Activated CD4-positive, alpha-beta T cell treated with anti-CD3 and anti-CD28 coated beads for 36 hours (primary cell): ENCODE measurements at regions of chr16 and their contacts with region 1.

Region 1: DNA sequence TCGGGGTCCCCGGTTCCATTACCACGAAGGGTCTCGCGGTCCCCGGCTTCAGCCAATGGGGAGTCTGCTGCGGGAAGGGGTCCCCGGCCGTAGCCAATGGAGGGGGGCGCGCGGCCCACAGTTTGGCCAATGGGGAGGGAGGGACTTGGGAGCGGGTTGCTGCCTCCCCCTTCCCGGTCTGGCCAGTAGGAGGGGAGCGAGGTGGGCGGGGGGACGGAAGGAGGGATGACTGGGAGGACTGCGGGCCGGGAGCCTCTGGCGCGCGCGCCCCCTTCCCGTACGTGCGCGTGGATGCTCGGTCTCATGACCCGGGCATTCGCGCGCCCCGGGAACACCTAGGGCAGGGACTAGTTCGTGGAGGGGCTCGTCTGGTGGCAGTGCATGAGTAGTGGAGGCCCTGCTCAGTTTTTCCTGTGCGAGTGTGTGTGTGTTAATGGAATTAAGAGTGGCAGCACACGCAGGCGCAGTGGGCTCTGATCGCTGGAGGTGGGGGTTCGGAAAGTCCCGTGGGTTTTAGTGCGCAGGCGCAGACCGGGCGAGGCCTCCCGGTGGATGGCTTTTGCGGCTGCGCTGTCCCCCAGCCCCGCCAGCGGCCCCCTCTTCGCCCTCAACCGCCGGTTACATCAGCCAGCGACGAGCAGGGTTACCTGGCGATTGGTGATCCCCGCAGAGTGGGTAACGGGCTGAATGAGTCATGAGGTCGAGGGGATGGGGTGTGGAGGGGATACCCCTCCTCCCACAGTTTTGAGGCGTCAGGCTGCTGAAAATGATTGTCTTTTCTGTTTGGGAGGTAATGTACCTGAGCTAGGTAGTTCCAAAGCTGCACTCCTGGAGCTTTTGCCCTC is 1.3 kb downstream of the ATXN2L start:
- DNase-seq: peak; percentile 98
- ATAC-seq: peak; percentile 80
- H3K4me3 Mint-ChIP-seq: peak overlapping the region; percentile 96
- H3K27ac Mint-ChIP-seq: peak overlapping the region; percentile 100
- H3K4me1 Mint-ChIP-seq: peaks cover 45% of the 10 kb centered on the region
- H3K27me3 Mint-ChIP-seq: no peaks in the 10 kb centered on the region

Region 2: DNA sequence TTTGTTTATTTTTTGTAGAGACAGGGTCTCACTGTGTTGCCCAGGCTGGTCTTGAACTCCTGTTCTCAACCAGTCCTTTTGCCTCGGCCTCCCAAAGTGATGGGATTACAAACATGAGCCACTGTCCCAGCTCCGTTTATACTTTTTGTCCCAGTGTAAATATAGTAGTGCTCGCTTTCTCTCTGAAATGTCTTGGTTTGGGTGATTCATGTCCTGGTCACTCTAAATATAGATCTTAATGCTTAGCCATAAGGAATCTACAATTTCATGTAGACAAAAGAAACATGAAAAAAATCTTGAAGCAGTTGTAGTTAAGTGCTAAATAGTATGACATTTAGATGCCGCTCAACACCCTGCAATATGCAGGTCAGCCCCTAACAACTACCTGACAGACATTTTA is 1147.3 kb before region 1 on chr16:
- CTCF ChIA-PET with region 1: no interaction called
- POLR2A ChIA-PET with region 1: no interaction called
- intact Hi-C with region 1: no loop called
- DNase-seq: no peak
- ATAC-seq: no peak
- H3K4me3 Mint-ChIP-seq: no peak overlapping the region
- H3K27ac Mint-ChIP-seq: no peak overlapping the region
- H3K4me1 Mint-ChIP-seq: no peaks in the 10 kb centered on the region
- H3K27me3 Mint-ChIP-seq: no peaks in the 10 kb centered on the region

Region 3: DNA sequence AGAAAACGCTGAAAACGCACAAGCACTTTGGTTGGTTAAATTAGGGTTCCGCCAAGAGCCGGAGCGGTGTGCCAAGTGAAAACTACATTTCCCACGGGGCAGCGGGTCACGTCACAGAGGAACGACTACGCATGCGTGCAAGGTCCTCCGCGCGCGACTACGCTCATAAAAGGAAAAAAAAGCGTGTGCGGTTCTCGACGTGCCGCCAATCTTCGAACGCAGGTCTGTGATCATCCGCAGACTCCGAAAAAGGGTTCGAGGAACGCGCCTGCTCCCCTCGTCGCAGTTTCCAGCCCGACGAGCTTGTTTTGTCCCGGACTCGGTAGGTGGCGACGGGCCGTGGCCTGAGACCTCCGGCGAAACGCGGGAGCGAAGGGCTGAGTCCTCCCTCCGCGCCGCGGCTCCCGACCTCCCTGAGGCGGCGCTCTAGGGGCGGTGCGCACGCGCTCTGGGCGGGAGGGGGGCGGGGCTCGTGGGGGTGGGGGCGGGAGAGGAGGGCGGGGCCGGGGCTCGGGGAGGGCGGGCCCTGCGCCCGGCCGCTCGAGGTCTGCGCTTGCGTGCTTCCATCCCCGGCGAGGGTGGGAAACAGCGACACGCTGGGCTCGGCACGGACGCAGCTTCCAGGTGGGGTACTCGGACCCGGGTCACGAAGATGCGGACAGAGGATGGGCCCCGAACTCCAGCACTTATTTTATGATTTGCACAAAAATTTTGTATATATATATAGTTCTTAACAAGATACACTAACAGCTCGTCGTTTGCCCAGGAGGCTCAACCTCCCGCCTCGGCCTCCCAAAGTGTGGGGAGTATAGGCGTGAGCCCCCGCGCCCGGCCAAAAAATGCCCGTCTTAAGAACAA is 270.1 kb before region 1 on chr16 and contains the start of gene SGF29:
- CTCF ChIA-PET with region 1: no interaction called
- POLR2A ChIA-PET with region 1: no interaction called
- intact Hi-C with region 1: loop called in 1 of 2 experiments (anchors 1 kb)
- DNase-seq: peak; percentile 97
- ATAC-seq: peak; percentile 85
- H3K4me3 Mint-ChIP-seq: peak within 1 kb of the TSS; percentile 87
- H3K27ac Mint-ChIP-seq: peak within 1 kb of the TSS; percentile 97
- H3K4me1 Mint-ChIP-seq: peaks cover 44% of the 10 kb centered on the region
- H3K27me3 Mint-ChIP-seq: no peaks in the 10 kb centered on the region
- total RNA-seq, gene SGF29: 23.6 to 35.5 TPM

Region 4: GRCh38 chr16:28879841-28880588 is 55.9 kb after region 1 on chr16:
- CTCF ChIA-PET with region 1: no interaction called
- POLR2A ChIA-PET with region 1: no interaction called
- intact Hi-C with region 1: loop called in 1 of 2 experiments (anchors 1 kb)
- DNase-seq: peak; percentile 97
- ATAC-seq: peak; percentile 97
- H3K4me3 Mint-ChIP-seq: peak overlapping the region; percentile 85
- H3K27ac Mint-ChIP-seq: peak overlapping the region; percentile 76
- H3K4me1 Mint-ChIP-seq: peaks cover 20% of the 10 kb centered on the region
- H3K27me3 Mint-ChIP-seq: peaks cover 7% of the 10 kb centered on the region

Region 5: GRCh38 chr16:28950648-28951409 is 126.7 kb after region 1 on chr16 and contains the start of gene NFATC2IP:
- CTCF ChIA-PET with region 1: no interaction called
- POLR2A ChIA-PET with region 1: interaction called, 3 read pairs
- intact Hi-C with region 1: loop called (anchors 1 to 2 kb)
- DNase-seq: peak; percentile 100
- ATAC-seq: peak; percentile 98
- H3K4me3 Mint-ChIP-seq: peak within 1 kb of the TSS; percentile 98
- H3K27ac Mint-ChIP-seq: peak within 1 kb of the TSS; percentile 89
- H3K4me1 Mint-ChIP-seq: peaks cover 24% of the 10 kb centered on the region
- H3K27me3 Mint-ChIP-seq: no peaks in the 10 kb centered on the region
- total RNA-seq, gene NFATC2IP: 69.2 to 72.7 TPM

Region 6: DNA sequence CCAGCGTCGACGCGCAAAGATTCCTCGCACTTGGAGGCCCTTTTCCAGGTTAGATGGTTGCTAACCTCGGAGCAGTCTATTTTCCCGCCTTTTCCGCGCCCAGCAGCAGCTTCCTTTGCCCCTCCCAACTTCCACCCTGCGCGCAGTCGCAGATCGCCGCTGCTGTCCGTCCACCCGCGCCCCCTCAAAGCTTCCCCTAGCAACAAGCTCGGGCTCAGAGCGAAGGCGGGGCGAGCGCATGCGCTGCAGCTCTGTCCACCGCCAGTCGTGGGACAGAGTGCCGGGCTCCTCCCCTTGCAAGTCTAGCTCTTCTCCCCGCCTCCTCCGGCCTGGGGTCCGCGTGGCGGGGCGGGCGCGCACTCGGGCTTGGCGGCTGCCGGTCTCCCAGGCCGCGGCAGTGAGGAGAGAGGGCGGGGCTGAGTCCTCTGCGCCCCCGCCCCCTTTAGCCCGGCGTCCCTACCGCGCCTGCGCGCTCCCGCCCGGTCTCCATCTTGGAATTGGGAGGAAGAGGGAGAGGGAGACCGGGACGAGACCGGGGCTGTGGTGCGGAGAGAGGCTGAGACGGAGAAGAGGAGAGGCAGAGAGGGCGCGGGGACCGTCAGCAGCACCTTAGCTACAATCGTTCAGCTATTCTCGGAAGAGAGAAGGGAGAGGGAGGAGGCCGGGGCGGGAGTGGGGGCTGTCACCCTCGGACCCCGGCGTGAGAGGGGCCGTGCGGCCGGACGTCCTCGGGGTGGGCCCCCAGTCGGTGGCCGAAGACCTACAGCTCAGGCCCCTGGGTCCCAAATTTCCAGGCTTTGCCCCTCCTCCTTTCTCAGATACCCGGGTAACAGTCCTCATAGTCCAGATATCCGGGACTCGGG is 1149.5 kb after region 1 on chr16 and contains the start of gene TAOK2:
- CTCF ChIA-PET with region 1: no interaction called
- POLR2A ChIA-PET with region 1: interaction called, 3 read pairs
- intact Hi-C with region 1: loop called in 1 of 2 experiments (anchors 2 kb)
- DNase-seq: peak; percentile 98
- ATAC-seq: peak; percentile 98
- H3K4me3 Mint-ChIP-seq: peak within 1 kb of the TSS; percentile 87
- H3K27ac Mint-ChIP-seq: peak within 1 kb of the TSS; percentile 86
- H3K4me1 Mint-ChIP-seq: peaks cover 31% of the 10 kb centered on the region
- H3K27me3 Mint-ChIP-seq: no peaks in the 10 kb centered on the region
- total RNA-seq, gene TAOK2: 24.1 to 24.4 TPM

Region 7: DNA sequence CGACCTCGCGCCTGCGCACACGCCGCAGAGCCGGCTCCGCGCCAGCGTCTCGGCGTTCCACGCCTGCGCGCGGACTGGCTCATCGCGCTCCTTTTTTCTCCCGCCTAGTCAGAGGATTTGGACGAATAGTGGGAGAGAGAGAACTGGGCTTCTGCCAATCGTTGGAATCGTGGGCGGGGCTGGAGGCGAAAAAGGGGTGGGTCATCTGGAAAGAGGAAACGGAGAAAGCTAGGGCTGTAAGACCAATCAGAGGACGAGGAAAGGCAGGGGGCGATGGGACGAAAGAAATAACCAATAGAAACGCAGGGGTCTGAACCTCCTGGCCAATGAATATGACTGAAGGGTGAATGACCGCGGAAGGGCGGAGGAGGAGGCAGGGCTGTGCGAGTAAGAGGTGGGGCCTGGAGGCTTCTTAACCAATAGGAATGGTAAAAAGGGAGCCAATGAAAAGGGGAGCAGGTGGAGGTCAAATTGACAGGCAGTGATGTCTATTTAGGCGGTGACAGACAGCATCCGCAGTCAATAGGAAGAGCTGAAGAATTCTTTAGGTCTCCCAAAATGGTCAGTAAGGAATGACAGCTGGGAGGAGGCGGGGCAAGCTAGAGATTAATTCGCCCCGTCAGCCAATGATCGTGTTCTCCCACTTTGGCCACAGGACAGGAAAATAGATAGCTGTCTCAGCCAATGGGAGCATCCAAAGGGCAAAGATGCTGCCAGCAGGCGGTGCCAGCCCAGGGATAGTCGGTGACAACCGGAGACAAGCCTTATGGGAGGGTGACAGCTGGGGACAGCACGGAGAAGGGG is 1546.6 kb after region 1 on chr16 and contains the start of gene TBC1D10B:
- CTCF ChIA-PET with region 1: no interaction called
- POLR2A ChIA-PET with region 1: no interaction called
- intact Hi-C with region 1: loop called in 1 of 2 experiments (anchors 10 kb)
- DNase-seq: peak; percentile 99
- ATAC-seq: peak; percentile 88
- H3K4me3 Mint-ChIP-seq: peak within 1 kb of the TSS; percentile 89
- H3K27ac Mint-ChIP-seq: peak within 1 kb of the TSS; percentile 97
- H3K4me1 Mint-ChIP-seq: peaks cover 40% of the 10 kb centered on the region
- H3K27me3 Mint-ChIP-seq: no peaks in the 10 kb centered on the region
- total RNA-seq, gene TBC1D10B: 38.1 to 43.4 TPM